ENCODE measurements at regions of chr12 and their contacts with region 1.

Region 1: GRCh38 chr12:93813972-93814821 is 137.0 kb downstream of the CRADD start:
- DNase-seq: peak; percentile 79 to 88
- ATAC-seq: peak; percentile 88
- H3K4me3 ChIP-seq: no peak overlapping the region
- H3K27ac ChIP-seq: peak overlapping the region; percentile 96 to 98
- H3K4me1 ChIP-seq: peaks cover 2 to 8% of the 10 kb centered on the region in 2 donors
- H3K27me3 ChIP-seq: no peaks in the 10 kb centered on the region

Region 2: GRCh38 chr12:93766796-93767523 is 47.2 kb before region 1 on chr12:
- intact Hi-C with region 1: no loop called
- DNase-seq: no peak
- ATAC-seq: peak; percentile 88
- H3K4me3 ChIP-seq: no peak overlapping the region
- H3K27ac ChIP-seq: no peak overlapping the region
- H3K4me1 ChIP-seq: peaks cover 0 to 1% of the 10 kb centered on the region in 2 donors
- H3K27me3 ChIP-seq: no peaks in the 10 kb centered on the region

Region 3: DNA sequence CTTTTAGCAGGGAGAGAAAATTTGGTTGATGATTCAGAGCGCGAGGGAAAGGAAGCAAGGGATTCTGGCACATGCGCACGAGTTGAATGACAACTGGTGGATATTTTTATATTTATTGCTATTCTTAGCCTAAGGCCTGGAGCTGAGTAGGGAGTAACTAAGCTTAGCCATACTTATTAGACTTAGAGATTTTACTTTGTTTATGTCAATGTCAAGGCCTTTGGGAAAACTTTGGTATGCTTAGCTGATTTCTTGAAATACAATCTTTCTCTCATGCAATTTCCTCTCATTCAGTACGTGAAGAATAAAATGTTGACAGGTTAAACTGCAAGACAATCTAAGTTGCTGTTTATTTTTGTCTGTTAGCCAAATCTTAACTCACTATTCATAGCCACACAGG is 35.9 kb before region 1 on chr12:
- intact Hi-C with region 1: loop called (anchors 5 kb)
- DNase-seq: peak; percentile 75 to 78
- ATAC-seq: peak; percentile 91
- H3K4me3 ChIP-seq: no peak overlapping the region
- H3K27ac ChIP-seq: peak overlapping the region in 1 of 2 donors; percentile 97
- H3K4me1 ChIP-seq: peaks cover 6 to 16% of the 10 kb centered on the region in 2 donors
- H3K27me3 ChIP-seq: no peaks in the 10 kb centered on the region

Region 4: GRCh38 chr12:93798279-93799151 is 15.7 kb before region 1 on chr12:
- intact Hi-C with region 1: loop called in 1 of 2 experiments (anchors 1 kb)
- DNase-seq: no peak
- ATAC-seq: no peak
- H3K4me3 ChIP-seq: no peak overlapping the region
- H3K27ac ChIP-seq: no peak overlapping the region
- H3K4me1 ChIP-seq: peaks cover 3 to 4% of the 10 kb centered on the region in 2 donors
- H3K27me3 ChIP-seq: no peaks in the 10 kb centered on the region